MCF 10A (cell line): ENCODE measurements at regions of chr2 and their contacts with region 1.

Region 1: DNA sequence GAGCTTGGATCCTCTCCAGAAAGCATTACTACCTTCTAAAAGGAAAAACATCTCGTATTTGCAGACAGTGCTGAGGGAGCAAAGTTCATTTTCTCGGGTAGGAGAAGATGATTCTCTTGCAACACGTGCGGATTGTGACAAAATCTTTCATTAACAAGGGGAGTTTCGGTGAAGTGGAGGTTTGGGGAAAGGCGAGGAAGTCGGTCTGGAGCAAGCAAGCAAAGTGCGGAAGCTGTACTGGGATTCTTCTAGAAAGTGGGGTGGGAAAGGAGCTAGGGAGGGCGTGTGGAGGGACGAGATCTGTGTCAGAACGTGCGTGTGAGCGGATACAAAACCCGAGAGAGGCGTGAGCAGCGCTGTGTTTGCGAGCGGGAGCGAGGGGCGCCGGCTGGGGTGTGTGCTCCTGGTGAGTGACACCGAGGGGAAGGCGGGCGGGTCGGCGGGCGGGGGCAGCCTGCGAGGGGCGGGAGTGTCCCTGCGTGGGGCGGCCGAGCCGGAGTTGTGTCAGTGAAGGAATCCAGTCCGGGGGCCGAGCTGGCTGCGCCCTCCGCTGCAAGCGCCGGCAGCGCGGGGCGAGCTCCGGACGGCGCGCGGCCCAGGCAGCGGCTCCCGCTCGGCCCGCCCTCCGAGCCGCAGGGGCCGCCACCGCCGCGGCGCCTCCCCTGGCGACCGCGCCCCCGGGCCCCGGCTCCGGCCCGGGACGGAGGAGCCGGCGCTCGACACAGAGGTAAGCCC is at the start of gene SPATS2L:
- DNase-seq: peak; percentile 63
- H3K4me3 Mint-ChIP-seq: peak within 1 kb of the TSS; percentile 99
- H3K27ac Mint-ChIP-seq: peak within 1 kb of the TSS; percentile 94
- H3K4me1 Mint-ChIP-seq: peaks cover 45% of the 10 kb centered on the region
- H3K27me3 Mint-ChIP-seq: no peaks in the 10 kb centered on the region
- CTCF ChIP-seq: no peak
- total RNA-seq, gene SPATS2L: 67.5 and 68.3 TPM in 2 replicates

Region 2: DNA sequence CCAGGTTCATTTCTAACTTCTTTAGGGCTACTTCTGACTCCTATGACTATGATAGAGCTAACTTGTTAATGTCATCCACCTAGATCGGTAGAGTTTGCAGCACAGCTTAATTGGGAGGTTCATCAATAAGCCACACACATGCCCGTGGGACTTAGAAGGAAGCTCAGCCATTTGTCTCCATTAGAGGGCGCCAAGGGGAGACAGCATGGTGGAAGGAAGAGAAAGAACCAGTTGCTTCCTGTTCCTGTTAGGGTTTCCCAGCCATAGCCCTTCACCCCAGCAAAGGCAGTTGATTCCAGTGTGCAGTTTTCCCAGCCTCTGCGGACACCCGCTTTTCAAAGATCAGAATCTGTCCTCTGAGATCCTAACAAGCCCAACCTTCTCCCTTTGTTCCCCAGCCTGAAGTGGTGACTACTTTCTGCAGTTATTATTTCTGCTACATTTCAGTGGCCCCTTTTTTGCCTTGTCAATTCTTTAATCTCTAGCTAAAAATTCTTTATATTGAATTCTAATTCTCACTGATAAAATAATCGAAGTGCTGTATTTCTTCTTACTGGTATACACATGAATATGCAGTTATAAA is 320.6 kb before region 1 on chr2:
- CTCF ChIA-PET with region 1: interaction called, 15 read pairs
- POLR2A ChIA-PET with region 1: interaction called, 6 read pairs
- intact Hi-C with region 1: loop called (anchors 1 kb)
- DNase-seq: peak; percentile 83
- H3K4me3 Mint-ChIP-seq: no peak overlapping the region
- H3K27ac Mint-ChIP-seq: no peak overlapping the region
- H3K4me1 Mint-ChIP-seq: peaks cover 6% of the 10 kb centered on the region
- H3K27me3 Mint-ChIP-seq: no peaks in the 10 kb centered on the region
- CTCF ChIP-seq: peak; percentile 64

Region 3: DNA sequence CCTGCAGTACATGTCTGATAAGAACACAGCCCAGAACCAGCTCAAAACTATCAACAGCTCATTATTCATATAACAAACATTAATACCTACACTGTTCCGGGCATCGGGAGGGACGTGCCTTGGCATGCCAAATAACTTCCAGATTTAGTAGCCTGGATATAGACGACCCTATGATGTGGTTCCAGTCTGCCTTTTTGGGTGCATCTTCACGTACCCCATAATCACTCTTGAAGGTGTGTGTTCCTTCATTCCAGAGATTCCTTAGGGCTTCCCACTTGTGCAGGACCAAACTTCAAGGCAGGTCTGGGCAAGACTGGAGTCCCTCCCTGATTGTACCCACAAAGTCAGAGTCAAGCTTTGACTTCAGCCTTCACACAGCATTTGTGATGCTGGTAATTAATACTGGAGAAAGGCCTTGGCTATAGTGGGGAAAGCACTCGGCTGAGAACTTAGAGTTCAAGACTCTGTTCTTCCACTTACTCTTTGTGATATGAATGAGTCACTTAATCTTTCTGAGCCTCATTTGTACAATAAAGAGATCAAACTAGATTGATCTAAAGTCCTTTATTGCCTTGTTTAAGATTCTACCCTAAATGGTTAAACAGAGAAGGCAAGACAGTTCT is 27.6 kb before region 1 on chr2:
- CTCF ChIA-PET with region 1: interaction called, 3 read pairs
- POLR2A ChIA-PET with region 1: interaction called, 31 read pairs
- intact Hi-C with region 1: no loop called
- DNase-seq: peak; percentile 32
- H3K4me3 Mint-ChIP-seq: no peak overlapping the region
- H3K27ac Mint-ChIP-seq: peak overlapping the region; percentile 73
- H3K4me1 Mint-ChIP-seq: peaks cover 21% of the 10 kb centered on the region
- H3K27me3 Mint-ChIP-seq: no peaks in the 10 kb centered on the region
- CTCF ChIP-seq: no peak

Region 4: GRCh38 chr2:200373973-200374416 is 67.6 kb after region 1 on chr2:
- CTCF ChIA-PET with region 1: interaction called, 4 read pairs
- POLR2A ChIA-PET with region 1: interaction called, 4 read pairs
- intact Hi-C with region 1: loop called (anchors 5 kb)
- DNase-seq: peak; percentile 52
- H3K4me3 Mint-ChIP-seq: peak overlapping the region; percentile 72
- H3K27ac Mint-ChIP-seq: peak overlapping the region; percentile 66
- H3K4me1 Mint-ChIP-seq: peaks cover 20% of the 10 kb centered on the region
- H3K27me3 Mint-ChIP-seq: no peaks in the 10 kb centered on the region
- CTCF ChIP-seq: no peak